H1 (cell line): ENCODE measurements at regions of chr14 and their contacts with region 1.

Region 1: GRCh38 chr14:61911574-61911973 is 149.4 kb downstream of the SNAPC1 start:
- DNase-seq: no peak
- H3K4me3 ChIP-seq: no peak overlapping the region
- H3K27ac ChIP-seq: no peak overlapping the region
- H3K4me1 ChIP-seq: no peaks in the 10 kb centered on the region
- H3K27me3 ChIP-seq: no peaks in the 10 kb centered on the region
- CTCF ChIP-seq: no peak
- EP300 ChIP-seq: no peak
- POLR2A ChIP-seq: no peak
- RAD21 ChIP-seq: no peak

Region 2: GRCh38 chr14:61894452-61895077 is 17.0 kb before region 1 on chr14:
- CTCF ChIA-PET with region 1: interaction called, 21 read pairs
- POLR2A ChIA-PET with region 1: no interaction called
- DNase-seq: peak in 1 of 2 experiments; percentile 69
- H3K4me3 ChIP-seq: no peak overlapping the region
- H3K27ac ChIP-seq: no peak overlapping the region
- H3K4me1 ChIP-seq: 0 out of 7 replicates have a peak, but pooled peaks cover 0 to 11% (median 0%) of the 10 kb centered on the region in 4 experiments
- H3K27me3 ChIP-seq: no peaks in the 10 kb centered on the region
- CTCF ChIP-seq: peak; percentile 59 to 75 (median 59)
- EP300 ChIP-seq: no peak
- POLR2A ChIP-seq: no peak
- RAD21 ChIP-seq: peak; percentile 64 to 72